ENCODE measurements at regions of chr19 and their contacts with region 1.

Region 1: GRCh38 chr19:44796701-44797115 is 12.2 kb upstream of the BCAM start:
- DNase-seq: no peak
- ATAC-seq: peak; percentile 52
- H3K4me3 Mint-ChIP-seq: peak overlapping the region; percentile 6; the same call in 1 of the 2 replicates
- H3K27ac Mint-ChIP-seq: peak overlapping the region; percentile 96
- H3K4me1 Mint-ChIP-seq: peaks cover 31% of the 10 kb centered on the region
- H3K27me3 Mint-ChIP-seq: peaks cover 14% of the 10 kb centered on the region
- CTCF ChIP-seq: no peak

Region 2: GRCh38 chr19:44785246-44785645 is 11.5 kb before region 1 on chr19:
- CTCF ChIA-PET with region 1: interaction called, 28 read pairs
- POLR2A ChIA-PET with region 1: no interaction called
- DNase-seq: no peak
- ATAC-seq: no peak
- H3K4me3 Mint-ChIP-seq: no peak overlapping the region
- H3K27ac Mint-ChIP-seq: no peak overlapping the region
- H3K4me1 Mint-ChIP-seq: peaks cover 5% of the 10 kb centered on the region; the same call in 1 of the 2 replicates
- H3K27me3 Mint-ChIP-seq: no peaks in the 10 kb centered on the region
- CTCF ChIP-seq: no peak

Region 3: GRCh38 chr19:44808463-44809371 is 12.0 kb after region 1 on chr19 and contains the start of gene BCAM:
- CTCF ChIA-PET with region 1: interaction called, 14 read pairs
- POLR2A ChIA-PET with region 1: interaction called, 6 read pairs
- DNase-seq: peak; percentile 70
- ATAC-seq: peak; percentile 30
- H3K4me3 Mint-ChIP-seq: peak within 1 kb of the TSS; percentile 75
- H3K27ac Mint-ChIP-seq: peak within 1 kb of the TSS; percentile 95
- H3K4me1 Mint-ChIP-seq: peaks cover 42% of the 10 kb centered on the region
- H3K27me3 Mint-ChIP-seq: peaks cover 78% of the 10 kb centered on the region
- CTCF ChIP-seq: no peak
- total RNA-seq, gene BCAM: 73.1 to 89.5 TPM (median 80.0 TPM) in 3 replicates